ENCODE measurements at regions of chr15 and their contacts with region 1.

Region 1: DNA sequence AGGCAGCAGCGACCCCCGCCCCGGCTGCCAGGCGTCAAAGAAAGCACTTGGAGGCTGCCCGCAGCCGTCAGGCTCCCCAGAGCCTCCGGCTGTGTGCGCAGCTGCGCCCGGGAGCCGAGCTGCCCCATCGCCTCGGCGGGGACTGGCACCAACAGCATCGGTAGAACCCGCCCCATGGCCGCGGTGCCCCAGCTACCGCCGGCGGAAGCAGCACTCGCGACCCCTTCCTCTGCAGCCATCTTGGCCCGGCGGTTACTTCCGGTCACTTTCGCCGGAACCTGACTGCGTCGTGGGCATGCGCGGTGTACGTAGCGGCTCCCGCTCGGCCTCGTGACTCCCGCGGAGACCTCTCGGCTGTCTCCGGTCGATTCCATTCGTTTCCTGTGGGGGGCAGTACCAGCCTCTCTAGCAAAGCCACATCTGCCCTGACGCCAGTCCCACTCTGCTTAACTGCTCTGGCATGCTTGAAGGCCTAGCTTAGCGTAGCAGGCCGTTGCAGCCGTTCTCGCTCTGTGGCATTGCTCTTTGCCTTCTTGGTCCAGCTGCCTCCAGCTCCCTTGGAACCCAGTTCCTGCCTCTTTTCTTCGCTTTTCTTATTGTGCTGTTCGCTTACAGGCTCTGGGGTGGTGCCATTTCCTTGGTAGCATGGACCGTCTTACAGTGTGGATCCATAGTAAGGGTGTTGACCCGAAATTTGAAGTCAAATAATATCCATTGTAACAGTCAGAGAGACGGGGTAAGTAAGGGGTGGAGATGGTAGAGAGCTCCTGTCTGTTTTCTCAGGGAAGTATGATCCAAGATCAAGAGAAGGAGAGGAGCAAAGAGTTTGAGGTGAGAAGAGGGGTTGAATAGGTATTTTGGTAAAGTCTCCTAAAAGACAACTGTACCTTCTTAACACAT is at the start of gene SPG11:
- DNase-seq: peak; percentile 81 to 95 (median 94)
- ATAC-seq: peak; percentile 91
- H3K4me3 ChIP-seq: peak within 1 kb of the TSS; percentile 85
- H3K4me3 Mint-ChIP-seq: peak within 1 kb of the TSS; percentile 84 to 99 (median 98)
- H3K27ac ChIP-seq: peak within 1 kb of the TSS; percentile 91
- H3K27ac Mint-ChIP-seq: peak within 1 kb of the TSS; percentile 94 to 99 (median 96)
- H3K4me1 ChIP-seq: peaks cover 35 to 53% of the 10 kb centered on the region in 2 donors
- H3K4me1 Mint-ChIP-seq: peaks cover 41 to 77% (median 69%) of the 10 kb centered on the region in 7 donors
- H3K27me3 ChIP-seq: no peaks in the 10 kb centered on the region
- H3K27me3 Mint-ChIP-seq: no peaks in the 10 kb centered on the region
- total RNA-seq, gene SPG11: 92.2 to 137 (median 131) TPM

Region 2: GRCh38 chr15:43854801-43855200 is 808.9 kb before region 1 on chr15:
- CTCF ChIA-PET with region 1: no interaction called
- POLR2A ChIA-PET with region 1: no interaction called
- intact Hi-C with region 1: no loop called
- DNase-seq: no peak
- ATAC-seq: no peak
- H3K4me3 ChIP-seq: no peak overlapping the region
- H3K4me3 Mint-ChIP-seq: no peak overlapping the region
- H3K27ac ChIP-seq: no peak overlapping the region
- H3K27ac Mint-ChIP-seq: no peak overlapping the region
- H3K4me1 ChIP-seq: no peaks in the 10 kb centered on the region
- H3K4me1 Mint-ChIP-seq: peaks cover 0 to 6% (median 0%) of the 10 kb centered on the region in 7 donors
- H3K27me3 ChIP-seq: no peaks in the 10 kb centered on the region
- H3K27me3 Mint-ChIP-seq: no peaks in the 10 kb centered on the region

Region 3: DNA sequence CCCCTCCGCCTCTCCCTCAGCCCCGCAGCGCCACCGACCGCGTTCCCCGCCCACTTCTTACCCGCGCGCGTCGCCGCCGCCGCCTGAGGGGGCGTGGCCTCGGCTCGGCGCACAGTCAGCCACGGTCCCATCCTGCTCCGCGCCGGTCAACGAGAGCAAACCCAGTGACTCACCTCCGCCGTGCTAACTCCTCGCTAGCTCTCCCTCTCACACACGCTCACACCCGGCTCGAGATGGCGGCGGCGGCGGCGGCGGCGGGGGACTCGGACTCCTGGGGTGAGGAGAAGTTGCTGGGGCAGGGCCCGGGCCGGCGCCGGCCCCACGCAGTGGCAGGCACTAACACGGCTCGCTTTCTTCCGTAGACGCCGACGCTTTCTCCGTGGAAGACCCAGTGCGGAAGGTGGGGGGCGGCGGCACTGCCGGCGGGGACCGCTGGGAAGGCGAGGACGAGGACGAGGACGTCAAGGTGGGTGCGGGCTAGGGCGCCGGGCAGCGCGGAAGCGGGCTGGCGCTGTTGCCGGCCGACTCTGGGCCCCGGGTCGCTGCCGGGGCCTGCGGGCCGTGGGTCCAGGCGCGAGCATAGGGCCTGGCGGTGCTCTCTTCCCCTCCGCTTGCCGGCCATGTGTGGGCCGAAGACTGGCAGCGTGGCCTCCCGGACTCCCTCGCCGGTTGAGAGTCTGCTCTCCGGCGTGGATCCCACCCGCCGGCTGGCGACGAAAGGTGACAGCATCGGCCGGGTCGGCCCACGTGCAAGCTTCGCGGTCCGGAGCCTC is 126.5 kb before region 1 on chr15 and contains the start of gene EIF3J:
- CTCF ChIA-PET with region 1: no interaction called
- POLR2A ChIA-PET with region 1: interaction called, 3 read pairs
- intact Hi-C with region 1: loop called in 1 of 2 experiments (anchors 5 kb)
- DNase-seq: peak; percentile 92 to 96 (median 95)
- ATAC-seq: peak; percentile 95
- H3K4me3 ChIP-seq: peak within 1 kb of the TSS; percentile 96
- H3K4me3 Mint-ChIP-seq: peak within 1 kb of the TSS; percentile 83 to 98 (median 94)
- H3K27ac ChIP-seq: peak within 1 kb of the TSS; percentile 97
- H3K27ac Mint-ChIP-seq: peak within 1 kb of the TSS; percentile 87 to 98 (median 95)
- H3K4me1 ChIP-seq: peaks cover 27 to 29% of the 10 kb centered on the region in 2 donors
- H3K4me1 Mint-ChIP-seq: peaks cover 35 to 60% (median 51%) of the 10 kb centered on the region in 7 donors
- H3K27me3 ChIP-seq: no peaks in the 10 kb centered on the region
- H3K27me3 Mint-ChIP-seq: no peaks in the 10 kb centered on the region
- total RNA-seq, gene EIF3J: 52.9 to 83.4 (median 66.5) TPM

Region 4: GRCh38 chr15:44593042-44593736 is 70.5 kb before region 1 on chr15:
- CTCF ChIA-PET with region 1: interaction called, 5 read pairs
- POLR2A ChIA-PET with region 1: interaction called, 10 read pairs
- intact Hi-C with region 1: loop called (anchors 2 kb)
- DNase-seq: peak in 7 of 9 donors; percentile 19 to 63 (median 57)
- ATAC-seq: peak; percentile 83
- H3K4me3 ChIP-seq: no peak overlapping the region
- H3K4me3 Mint-ChIP-seq: no peak overlapping the region
- H3K27ac ChIP-seq: no peak overlapping the region
- H3K27ac Mint-ChIP-seq: peak overlapping the region in 8 of 9 donors; percentile 19 to 92 (median 52)
- H3K4me1 ChIP-seq: peaks cover 0 to 1% of the 10 kb centered on the region in 2 donors
- H3K4me1 Mint-ChIP-seq: peaks cover 3 to 19% (median 12%) of the 10 kb centered on the region in 7 donors
- H3K27me3 ChIP-seq: no peaks in the 10 kb centered on the region
- H3K27me3 Mint-ChIP-seq: no peaks in the 10 kb centered on the region

Region 5: DNA sequence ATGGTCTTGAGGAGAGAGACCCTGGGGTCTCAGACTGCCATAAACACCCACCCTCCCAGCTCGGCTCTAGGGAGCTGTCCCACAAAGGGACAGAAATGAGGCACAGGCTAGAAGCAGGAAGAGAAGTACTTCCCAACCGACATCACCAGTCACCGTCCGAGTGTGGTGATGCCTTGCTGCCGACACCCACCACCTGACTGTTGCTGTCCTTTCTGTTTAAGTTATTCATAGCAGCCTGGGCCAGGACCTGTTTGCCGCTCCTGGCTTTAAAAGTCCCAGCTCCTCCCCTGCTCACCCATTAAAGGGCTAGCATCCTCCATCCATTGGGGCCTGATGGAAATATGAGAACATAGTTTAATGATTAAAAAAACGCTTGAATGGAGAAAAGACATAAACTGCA is 13.0 kb after region 1 on chr15:
- CTCF ChIA-PET with region 1: interaction called, 69 read pairs
- POLR2A ChIA-PET with region 1: interaction called, 786 read pairs
- intact Hi-C with region 1: loop called (anchors 1 kb)
- DNase-seq: peak in 1 of 9 donors; percentile 31
- ATAC-seq: peak; percentile 56
- H3K4me3 ChIP-seq: peak overlapping the region; percentile 44
- H3K4me3 Mint-ChIP-seq: peak overlapping the region; percentile 72 to 92 (median 84)
- H3K27ac ChIP-seq: peak overlapping the region; percentile 60
- H3K27ac Mint-ChIP-seq: peak overlapping the region; percentile 89 to 99 (median 96)
- H3K4me1 ChIP-seq: peaks cover 83 to 85% of the 10 kb centered on the region in 2 donors
- H3K4me1 Mint-ChIP-seq: peaks cover 67 to 96% (median 92%) of the 10 kb centered on the region in 7 donors
- H3K27me3 ChIP-seq: no peaks in the 10 kb centered on the region
- H3K27me3 Mint-ChIP-seq: no peaks in the 10 kb centered on the region

Region 6: DNA sequence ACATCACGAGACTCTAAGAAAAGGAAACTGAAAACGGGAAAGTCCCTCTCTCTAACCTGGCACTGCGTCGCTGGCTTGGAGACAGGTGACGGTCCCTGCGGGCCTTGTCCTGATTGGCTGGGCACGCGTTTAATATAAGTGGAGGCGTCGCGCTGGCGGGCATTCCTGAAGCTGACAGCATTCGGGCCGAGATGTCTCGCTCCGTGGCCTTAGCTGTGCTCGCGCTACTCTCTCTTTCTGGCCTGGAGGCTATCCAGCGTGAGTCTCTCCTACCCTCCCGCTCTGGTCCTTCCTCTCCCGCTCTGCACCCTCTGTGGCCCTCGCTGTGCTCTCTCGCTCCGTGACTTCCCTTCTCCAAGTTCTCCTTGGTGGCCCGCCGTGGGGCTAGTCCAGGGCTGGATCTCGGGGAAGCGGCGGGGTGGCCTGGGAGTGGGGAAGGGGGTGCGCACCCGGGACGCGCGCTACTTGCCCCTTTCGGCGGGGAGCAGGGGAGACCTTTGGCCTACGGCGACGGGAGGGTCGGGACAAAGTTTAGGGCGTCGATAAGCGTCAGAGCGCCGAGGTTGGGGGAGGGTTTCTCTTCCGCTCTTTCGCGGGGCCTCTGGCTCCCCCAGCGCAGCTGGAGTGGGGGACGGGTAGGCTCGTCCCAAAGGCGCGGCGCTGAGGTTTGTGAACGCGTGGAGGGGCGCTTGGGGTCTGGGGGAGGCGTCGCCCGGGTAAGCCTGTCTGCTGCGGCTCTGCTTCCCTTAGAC is 47.9 kb after region 1 on chr15 and contains the start of gene B2M:
- CTCF ChIA-PET with region 1: interaction called, 235 read pairs
- POLR2A ChIA-PET with region 1: interaction called, 3,822 read pairs
- intact Hi-C with region 1: loop called (anchors 1 kb)
- DNase-seq: peak; percentile 95 to 98 (median 97)
- ATAC-seq: peak; percentile 84
- H3K4me3 ChIP-seq: peak within 1 kb of the TSS; percentile 83
- H3K4me3 Mint-ChIP-seq: peak within 1 kb of the TSS; percentile 93 to 100 (median 98)
- H3K27ac ChIP-seq: peak within 1 kb of the TSS; percentile 95
- H3K27ac Mint-ChIP-seq: peak within 1 kb of the TSS; percentile 98 to 100 (median 100)
- H3K4me1 ChIP-seq: peaks cover 15 to 26% of the 10 kb centered on the region in 2 donors
- H3K4me1 Mint-ChIP-seq: peaks cover 31 to 76% (median 54%) of the 10 kb centered on the region in 7 donors
- H3K27me3 ChIP-seq: no peaks in the 10 kb centered on the region
- H3K27me3 Mint-ChIP-seq: peaks cover 0 to 17% (median 0%) of the 10 kb centered on the region in 5 donors
- total RNA-seq, gene B2M: 4,325 to 8,698 (median 6,221) TPM

Region 7: DNA sequence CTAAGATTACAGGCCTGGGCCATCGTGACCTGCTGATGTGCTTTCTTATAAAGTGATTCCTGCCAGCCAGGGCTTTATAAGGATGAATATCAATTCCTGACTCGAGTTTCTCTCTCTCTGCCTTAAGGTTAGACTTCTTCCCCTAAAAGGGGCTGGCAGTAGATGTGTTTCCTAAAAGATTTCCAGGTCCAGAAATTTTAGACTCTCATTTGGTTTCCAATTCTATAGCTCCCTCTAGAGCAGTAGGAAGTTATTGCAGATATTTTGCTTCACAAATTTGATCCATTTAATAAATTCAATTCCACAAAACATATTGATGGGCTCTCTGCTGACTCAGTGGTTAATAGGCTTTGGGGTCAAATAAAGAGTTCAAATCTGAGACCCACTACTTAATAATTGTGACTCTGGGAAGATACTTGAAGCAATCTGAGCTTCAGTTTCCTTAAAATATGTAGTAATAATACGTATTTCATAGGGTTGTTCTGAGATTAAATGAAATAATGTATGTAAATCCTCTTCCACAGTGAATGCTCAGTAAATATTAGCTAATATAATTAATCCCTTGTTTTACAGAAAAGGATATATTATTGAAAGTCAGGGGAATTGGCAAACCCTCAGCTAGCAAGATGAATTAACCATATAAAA is 74.8 kb after region 1 on chr15:
- CTCF ChIA-PET with region 1: interaction called, 105 read pairs
- POLR2A ChIA-PET with region 1: interaction called, 3,822 read pairs
- intact Hi-C with region 1: loop called (anchors 1 kb)
- DNase-seq: peak in 6 of 9 donors; percentile 40 to 67 (median 60)
- ATAC-seq: peak; percentile 68
- H3K4me3 ChIP-seq: no peak overlapping the region
- H3K4me3 Mint-ChIP-seq: peak overlapping the region in 7 of 10 donors; percentile 49 to 67 (median 53)
- H3K27ac ChIP-seq: peak overlapping the region; percentile 54
- H3K27ac Mint-ChIP-seq: peak overlapping the region; percentile 23 to 95 (median 86)
- H3K4me1 ChIP-seq: peaks cover 42 to 56% of the 10 kb centered on the region in 2 donors
- H3K4me1 Mint-ChIP-seq: peaks cover 24 to 62% (median 56%) of the 10 kb centered on the region in 7 donors
- H3K27me3 ChIP-seq: no peaks in the 10 kb centered on the region
- H3K27me3 Mint-ChIP-seq: peaks cover 0 to 2% (median 0%) of the 10 kb centered on the region in 5 donors

Measured in naive thymus-derived CD4-positive, alpha-beta T cell (primary cell).